H1 (cell line): ENCODE measurements at regions of chr11 and their contacts with region 1.

Region 1: GRCh38 chr11:69642913-69643632 is 2.1 kb downstream of the CCND1 start:
- DNase-seq: peak in 1 of 2 experiments; percentile 90
- H3K4me3 ChIP-seq: peak overlapping the region; percentile 90 to 97 (median 95)
- H3K27ac ChIP-seq: no peak overlapping the region
- H3K4me1 ChIP-seq: peaks cover 0 to 9% (median 5%) of the 10 kb centered on the region in 4 experiments; a peak in 5 of 7 replicates
- H3K27me3 ChIP-seq: peaks cover 0 to 6% (median 2%) of the 10 kb centered on the region in 4 experiments; a peak in 1 of 7 replicates
- CTCF ChIP-seq: peak in 2 of 3 experiments; percentile 91 to 94; a peak in 3 of 4 replicates
- EP300 ChIP-seq: no peak
- POLR2A ChIP-seq: peak in 1 of 2 experiments; percentile 69; a peak in 2 of 3 replicates
- RAD21 ChIP-seq: peak; percentile 93 to 98

Region 2: GRCh38 chr11:69296890-69297786 is 345.9 kb before region 1 on chr11:
- CTCF ChIA-PET with region 1: interaction called, 31 read pairs
- POLR2A ChIA-PET with region 1: interaction called, 12 read pairs
- DNase-seq: peak in 1 of 2 experiments; percentile 31
- H3K4me3 ChIP-seq: no peak overlapping the region
- H3K27ac ChIP-seq: no peak overlapping the region
- H3K4me1 ChIP-seq: peaks cover 0 to 2% (median under 1%) of the 10 kb centered on the region in 4 experiments; a peak in 2 of 7 replicates
- H3K27me3 ChIP-seq: no peaks in the 10 kb centered on the region; a peak in 1 of 7 replicates
- CTCF ChIP-seq: no peak
- EP300 ChIP-seq: no peak
- POLR2A ChIP-seq: no peak
- RAD21 ChIP-seq: no peak

Region 3: GRCh38 chr11:69443138-69443967 is 199.7 kb before region 1 on chr11:
- CTCF ChIA-PET with region 1: interaction called, 5 read pairs
- POLR2A ChIA-PET with region 1: interaction called, 20 read pairs
- DNase-seq: peak; percentile 70 to 91
- H3K4me3 ChIP-seq: peak overlapping the region in 1 of 4 experiments; percentile 38; a peak in 1 of 8 replicates
- H3K27ac ChIP-seq: 0 out of 2 replicates have a peak overlapping the region, but pooled peaks have one; percentile 3
- H3K4me1 ChIP-seq: peaks cover 13 to 37% (median 33%) of the 10 kb centered on the region in 4 experiments
- H3K27me3 ChIP-seq: no peaks in the 10 kb centered on the region; a peak in 2 of 7 replicates
- CTCF ChIP-seq: peak in 1 of 3 experiments; percentile 13; a peak in 1 of 4 replicates
- EP300 ChIP-seq: no peak
- POLR2A ChIP-seq: peak in 1 of 2 experiments; percentile 64; a peak in 1 of 3 replicates
- RAD21 ChIP-seq: peak in 1 of 2 experiments; percentile 0; a peak in 1 of 4 replicates

Region 4: GRCh38 chr11:69630009-69630408 is 13.1 kb before region 1 on chr11:
- CTCF ChIA-PET with region 1: interaction called, 13 read pairs
- POLR2A ChIA-PET with region 1: interaction called, 16 read pairs
- DNase-seq: no peak
- H3K4me3 ChIP-seq: no peak overlapping the region
- H3K27ac ChIP-seq: no peak overlapping the region
- H3K4me1 ChIP-seq: peaks cover 0 to 4% (median 2%) of the 10 kb centered on the region in 4 experiments; a peak in 3 of 7 replicates
- H3K27me3 ChIP-seq: peaks cover 0 to 4% (median 3%) of the 10 kb centered on the region in 4 experiments; a peak in 3 of 7 replicates
- CTCF ChIP-seq: no peak
- EP300 ChIP-seq: no peak
- POLR2A ChIP-seq: no peak
- RAD21 ChIP-seq: no peak

Region 5: DNA sequence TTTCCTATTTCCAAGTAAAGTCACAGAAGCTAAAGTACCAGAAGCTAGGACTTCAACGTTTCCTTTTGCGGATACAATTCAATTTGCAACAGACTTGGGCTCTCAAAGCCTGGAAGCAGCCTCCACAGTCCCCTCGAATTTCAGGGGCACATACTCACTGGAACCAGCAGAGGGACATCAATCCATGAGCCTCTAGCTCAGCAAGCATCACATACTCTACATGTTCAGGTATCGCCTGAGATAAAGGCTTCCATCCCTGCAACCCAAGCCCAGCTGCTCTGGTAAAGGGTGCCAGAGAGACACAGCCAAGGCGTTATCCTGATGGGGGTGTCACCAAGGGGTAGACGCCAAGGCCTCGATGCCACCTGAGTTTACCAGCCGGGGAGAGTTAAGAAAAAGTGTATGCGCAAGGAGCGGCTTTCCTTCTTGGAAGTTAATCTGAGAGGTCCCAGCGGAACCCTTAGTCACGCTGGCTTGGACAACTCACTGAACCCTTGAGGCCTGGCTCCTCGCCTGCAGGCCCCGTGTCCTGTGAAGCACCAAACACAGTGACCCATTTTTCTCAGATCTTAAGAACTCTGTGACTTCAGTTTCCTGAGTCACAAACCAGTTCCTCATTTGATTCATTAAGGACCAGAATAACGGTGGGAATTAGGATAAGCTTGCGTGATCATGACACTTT is 19.1 kb after region 1 on chr11:
- CTCF ChIA-PET with region 1: interaction called, 36 read pairs
- POLR2A ChIA-PET with region 1: interaction called, 197 read pairs
- DNase-seq: no peak
- H3K4me3 ChIP-seq: no peak overlapping the region
- H3K27ac ChIP-seq: no peak overlapping the region
- H3K4me1 ChIP-seq: peaks cover 5 to 16% (median 13%) of the 10 kb centered on the region in 4 experiments
- H3K27me3 ChIP-seq: no peaks in the 10 kb centered on the region; a peak in 1 of 7 replicates
- CTCF ChIP-seq: peak; percentile 47 to 74 (median 54)
- EP300 ChIP-seq: no peak
- POLR2A ChIP-seq: no peak
- RAD21 ChIP-seq: peak; percentile 53 to 56